Tibial artery (tissue), 4 donors: ENCODE measurements at regions of chr9 and their contacts with region 1.

Region 1: DNA sequence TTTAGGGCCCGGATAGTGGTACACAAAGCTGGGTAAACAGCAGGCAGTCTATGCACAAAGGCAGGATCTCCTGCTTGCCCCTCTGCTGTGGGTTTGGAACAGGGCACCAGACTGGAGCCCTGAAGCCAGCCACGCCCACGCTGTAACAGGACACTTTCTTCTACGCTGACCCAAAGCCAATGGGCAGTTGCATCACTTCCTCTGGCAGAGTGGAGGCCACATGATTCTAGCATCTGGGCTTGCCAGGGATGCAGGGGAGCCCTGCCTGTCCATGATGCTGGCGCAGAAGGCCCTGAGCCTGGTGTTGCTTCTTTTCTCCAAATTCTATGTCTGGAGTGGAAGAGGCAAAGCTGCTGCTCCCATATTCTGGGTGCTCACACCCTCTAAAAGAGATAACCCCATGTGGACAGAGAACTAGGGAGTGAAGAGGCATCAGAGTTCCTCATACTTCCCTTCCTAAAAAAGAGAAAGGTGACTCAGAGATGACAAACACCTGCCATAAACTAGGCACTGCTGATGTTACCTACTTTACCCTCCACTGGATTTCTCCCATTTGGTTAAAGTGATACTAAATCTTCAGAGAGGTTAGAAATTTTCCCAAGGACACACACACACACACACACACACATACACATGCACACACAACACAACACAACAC is 260.3 kb upstream of the KLF4 start:
- DNase-seq: peak; percentile 97
- H3K4me3 ChIP-seq: no peak overlapping the region
- H3K27ac ChIP-seq: peak overlapping the region; percentile 71 to 80
- H3K4me1 ChIP-seq: peaks cover 7 to 36% (median 30%) of the 10 kb centered on the region in 4 donors
- H3K27me3 ChIP-seq: no peaks in the 10 kb centered on the region
- CTCF ChIP-seq: no peak

Region 2: GRCh38 chr9:107637421-107638420 is 112.2 kb before region 1 on chr9:
- intact Hi-C with region 1: loop called (anchors 2 kb)
- DNase-seq: peak; percentile 97 to 98
- H3K4me3 ChIP-seq: peak overlapping the region; percentile 46 to 53
- H3K27ac ChIP-seq: peak overlapping the region; percentile 96 to 99
- H3K4me1 ChIP-seq: peaks cover 0 to 27% (median 12%) of the 10 kb centered on the region in 4 donors
- H3K27me3 ChIP-seq: no peaks in the 10 kb centered on the region
- CTCF ChIP-seq: peak; percentile 39 to 51

Region 3: GRCh38 chr9:107905308-107906020 is 155.5 kb after region 1 on chr9:
- intact Hi-C with region 1: no loop called
- DNase-seq: no peak
- H3K4me3 ChIP-seq: no peak overlapping the region
- H3K27ac ChIP-seq: no peak overlapping the region
- H3K4me1 ChIP-seq: no peaks in the 10 kb centered on the region
- H3K27me3 ChIP-seq: no peaks in the 10 kb centered on the region
- CTCF ChIP-seq: no peak

Region 4: GRCh38 chr9:108142504-108143201 is 392.7 kb after region 1 on chr9:
- intact Hi-C with region 1: loop called (anchors 10 kb)
- DNase-seq: peak; percentile 90 to 94
- H3K4me3 ChIP-seq: no peak overlapping the region
- H3K27ac ChIP-seq: peak overlapping the region; percentile 65 to 70
- H3K4me1 ChIP-seq: peaks cover 0 to 22% (median 16%) of the 10 kb centered on the region in 4 donors
- H3K27me3 ChIP-seq: no peaks in the 10 kb centered on the region
- CTCF ChIP-seq: peak in 1 of 2 experiments; percentile 18